ENCODE measurements at regions of chr14 and their contacts with region 1.

Region 1: DNA sequence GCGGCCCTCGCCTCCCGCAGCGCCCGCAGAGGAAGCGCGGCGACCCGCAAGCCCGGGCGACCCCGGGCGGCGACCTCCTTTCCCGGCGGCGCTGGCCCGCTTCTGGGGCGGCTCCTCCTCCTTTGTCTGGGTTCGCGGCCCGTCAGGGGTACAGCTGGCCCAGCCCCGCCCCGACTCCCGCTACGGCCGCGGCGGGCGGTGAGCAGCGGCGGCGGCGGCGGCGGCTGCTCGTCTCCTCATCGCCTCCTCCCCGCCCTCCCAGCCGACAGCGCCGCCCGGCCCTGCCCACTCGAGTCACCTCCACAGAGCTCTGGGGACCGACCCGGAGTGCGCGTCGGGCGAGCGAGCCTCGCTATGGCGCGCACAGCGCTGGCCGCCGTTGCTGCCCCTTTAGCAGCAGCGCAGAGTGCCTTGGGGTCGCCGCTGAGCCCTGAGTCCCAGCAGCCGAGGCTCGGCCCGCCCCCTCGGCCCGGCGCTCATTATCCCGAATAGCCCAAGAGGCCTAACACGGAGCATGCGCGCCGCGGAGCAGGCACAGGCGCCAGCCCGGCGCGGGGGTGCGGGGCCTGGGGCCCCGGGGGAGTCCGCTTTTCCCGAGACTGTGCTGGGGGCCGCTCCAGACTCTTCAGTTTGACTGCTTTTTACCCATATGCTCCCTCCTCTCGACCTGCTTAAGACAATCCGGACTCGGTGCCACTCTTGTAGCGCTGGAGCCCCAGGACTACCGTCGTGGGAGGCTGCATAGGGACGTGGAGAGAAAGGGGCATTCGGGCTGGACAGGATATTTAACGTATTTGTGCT is at the start of gene SOS2:
- DNase-seq: peak; percentile 83 to 85
- ATAC-seq: peak; percentile 78 to 93 (median 86)
- H3K4me3 ChIP-seq: peak within 1 kb of the TSS; percentile 95
- H3K4me3 Mint-ChIP-seq: peak within 1 kb of the TSS; percentile 89
- H3K27ac ChIP-seq: peak within 1 kb of the TSS; percentile 98
- H3K27ac Mint-ChIP-seq: peak within 1 kb of the TSS; percentile 92 to 96
- H3K4me1 ChIP-seq: peaks cover 14% of the 10 kb centered on the region
- H3K4me1 Mint-ChIP-seq: peaks cover 35% of the 10 kb centered on the region in 2 donors
- H3K27me3 ChIP-seq: no peaks in the 10 kb centered on the region
- H3K27me3 Mint-ChIP-seq: no peaks in the 10 kb centered on the region
- CTCF ChIP-seq: no peak
- total RNA-seq, gene SOS2: 64.7 to 82.2 (median 69.5) TPM

Region 2: GRCh38 chr14:49862089-49862673 is 369.5 kb before region 1 on chr14:
- intact Hi-C with region 1: loop called (anchors 5 kb)
- DNase-seq: peak; percentile 87 to 94
- ATAC-seq: peak; percentile 34 to 78 (median 38)
- H3K4me3 ChIP-seq: peak overlapping the region; percentile 73
- H3K4me3 Mint-ChIP-seq: no peak overlapping the region
- H3K27ac ChIP-seq: peak overlapping the region; percentile 97
- H3K27ac Mint-ChIP-seq: no peak overlapping the region
- H3K4me1 ChIP-seq: peaks cover 31% of the 10 kb centered on the region
- H3K4me1 Mint-ChIP-seq: no peaks in the 10 kb centered on the region
- H3K27me3 ChIP-seq: no peaks in the 10 kb centered on the region
- H3K27me3 Mint-ChIP-seq: peaks cover 5 to 10% of the 10 kb centered on the region in 2 donors
- CTCF ChIP-seq: peak; percentile 100

Region 3: DNA sequence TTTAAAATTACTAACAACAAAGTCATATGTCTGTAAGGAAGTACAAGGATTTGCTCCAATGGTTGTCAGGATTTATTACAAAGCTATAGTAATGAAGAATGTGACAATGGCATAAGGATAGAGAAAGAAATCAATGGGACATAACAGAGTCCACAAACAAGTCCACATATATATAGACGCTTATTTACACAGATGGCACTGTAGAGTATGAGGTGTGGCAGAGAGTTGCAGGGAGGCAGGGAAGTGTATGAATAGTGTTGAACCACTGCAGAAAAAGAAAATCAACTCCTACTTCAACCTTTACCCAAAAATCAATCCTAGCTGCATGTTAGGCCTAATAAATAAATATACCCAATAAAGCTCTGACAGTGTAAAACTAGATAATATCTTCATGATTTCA is 21.6 kb before region 1 on chr14:
- intact Hi-C with region 1: no loop called
- DNase-seq: no peak
- ATAC-seq: no peak
- H3K4me3 ChIP-seq: no peak overlapping the region
- H3K4me3 Mint-ChIP-seq: no peak overlapping the region
- H3K27ac ChIP-seq: no peak overlapping the region
- H3K27ac Mint-ChIP-seq: no peak overlapping the region
- H3K4me1 ChIP-seq: no peaks in the 10 kb centered on the region
- H3K4me1 Mint-ChIP-seq: peaks cover 30 to 34% of the 10 kb centered on the region in 2 donors
- H3K27me3 ChIP-seq: no peaks in the 10 kb centered on the region
- H3K27me3 Mint-ChIP-seq: no peaks in the 10 kb centered on the region
- CTCF ChIP-seq: no peak

Region 4: DNA sequence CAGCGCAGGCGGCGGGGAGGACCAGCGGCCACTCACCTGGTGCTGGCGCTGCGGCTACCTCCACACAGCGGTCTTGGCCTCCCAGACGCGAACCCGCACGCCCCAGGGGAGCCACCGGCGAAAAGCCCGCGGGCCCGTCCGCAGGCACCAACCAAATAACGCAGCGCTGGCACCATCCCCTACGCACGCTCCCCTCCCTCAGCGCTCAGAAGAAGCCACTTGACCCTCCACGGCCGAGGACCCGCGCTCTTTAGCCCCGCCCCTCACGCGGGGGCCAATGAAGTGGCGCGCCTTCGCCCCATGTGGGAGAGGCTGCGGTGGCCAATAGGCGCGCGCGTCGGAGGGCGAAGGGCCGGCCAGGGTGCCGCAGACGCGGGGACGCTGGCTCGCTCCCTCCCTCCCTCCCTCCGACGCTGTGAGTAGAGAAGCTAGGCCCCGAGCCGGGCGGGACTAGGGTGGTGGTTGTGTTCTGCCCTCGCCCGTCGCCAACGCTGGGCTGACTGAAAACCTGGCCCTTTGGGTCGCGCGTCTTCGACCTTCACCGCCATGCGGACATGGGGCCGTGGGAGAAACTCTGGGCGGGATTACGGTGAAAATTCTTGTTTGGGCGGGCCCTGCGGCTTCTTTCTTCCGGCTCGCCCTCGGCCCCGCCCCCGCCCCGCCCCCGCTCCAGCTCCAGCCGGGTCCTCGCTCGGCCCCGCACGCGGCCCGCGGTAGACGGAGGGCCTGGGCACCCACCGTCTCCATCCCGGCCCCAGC is 80.5 kb after region 1 on chr14 and contains the starts of genes DMAC2L and L2HGDH:
- intact Hi-C with region 1: loop called (anchors 5 kb)
- DNase-seq: peak; percentile 89 to 94
- ATAC-seq: peak; percentile 90 to 98 (median 90)
- H3K4me3 ChIP-seq: peak within 1 kb of the TSS; percentile 84
- H3K4me3 Mint-ChIP-seq: peak within 1 kb of the TSS; percentile 94
- H3K27ac ChIP-seq: peak within 1 kb of the TSS; percentile 89
- H3K27ac Mint-ChIP-seq: peak within 1 kb of the TSS; percentile 94 to 95
- H3K4me1 ChIP-seq: peaks cover 18% of the 10 kb centered on the region
- H3K4me1 Mint-ChIP-seq: peaks cover 27 to 46% of the 10 kb centered on the region in 2 donors
- H3K27me3 ChIP-seq: no peaks in the 10 kb centered on the region
- H3K27me3 Mint-ChIP-seq: no peaks in the 10 kb centered on the region
- CTCF ChIP-seq: no peak
- total RNA-seq, gene DMAC2L: 24.7 to 28.7 (median 25.0) TPM
- total RNA-seq, gene L2HGDH: 4.2 to 5.6 (median 5.4) TPM

Region 5: GRCh38 chr14:50347521-50347920 is 115.8 kb after region 1 on chr14:
- intact Hi-C with region 1: no loop called
- DNase-seq: no peak
- ATAC-seq: no peak
- H3K4me3 ChIP-seq: no peak overlapping the region
- H3K4me3 Mint-ChIP-seq: no peak overlapping the region
- H3K27ac ChIP-seq: no peak overlapping the region
- H3K27ac Mint-ChIP-seq: peak overlapping the region in 1 of 2 donors; percentile 17
- H3K4me1 ChIP-seq: peaks cover 6% of the 10 kb centered on the region
- H3K4me1 Mint-ChIP-seq: peaks cover 12 to 34% of the 10 kb centered on the region in 2 donors
- H3K27me3 ChIP-seq: no peaks in the 10 kb centered on the region
- H3K27me3 Mint-ChIP-seq: no peaks in the 10 kb centered on the region
- CTCF ChIP-seq: no peak

Region 6: DNA sequence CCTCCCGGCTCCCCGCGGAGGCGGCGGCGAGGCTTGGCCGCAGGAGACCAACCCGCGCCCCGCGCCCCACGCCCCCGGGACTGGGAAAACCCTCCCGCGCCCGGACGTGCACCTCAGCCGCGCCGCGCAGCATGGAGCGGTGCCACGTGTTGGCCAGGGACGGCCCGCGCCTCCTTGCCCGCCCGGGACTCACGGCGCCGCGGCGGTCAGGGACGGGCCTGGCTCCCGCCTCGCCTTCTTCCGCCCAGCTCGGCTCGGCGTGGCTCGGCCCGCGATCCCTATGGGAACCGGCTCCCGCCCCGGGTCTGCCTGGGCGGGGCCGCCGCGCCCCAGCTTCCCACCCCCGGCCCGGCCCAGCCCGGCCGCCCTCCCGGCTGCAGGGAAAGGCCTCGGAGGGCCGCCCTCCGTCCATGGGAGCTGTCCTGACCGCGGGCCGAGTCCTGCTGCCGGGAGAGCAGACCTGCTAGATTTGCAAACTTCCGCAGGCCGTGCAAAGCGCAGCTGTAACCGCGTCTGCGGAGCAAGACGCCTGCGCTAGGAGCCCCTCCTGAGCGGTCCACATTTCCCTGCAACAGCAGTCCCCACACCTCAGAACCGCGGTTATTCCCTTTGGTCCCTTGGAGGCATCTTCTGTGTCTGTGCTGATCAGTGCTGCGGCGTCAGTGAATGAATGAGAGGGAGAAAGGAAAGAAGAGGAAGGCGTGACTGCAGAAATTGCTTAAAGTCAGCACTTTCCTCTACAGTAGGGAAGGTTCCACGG is 165.1 kb after region 1 on chr14 and contains the start of gene CDKL1:
- intact Hi-C with region 1: loop called (anchors 5 kb)
- DNase-seq: peak; percentile 28 to 56
- ATAC-seq: peak; percentile 72 to 80 (median 77)
- H3K4me3 ChIP-seq: peak within 1 kb of the TSS; percentile 48
- H3K4me3 Mint-ChIP-seq: peak within 1 kb of the TSS; percentile 91
- H3K27ac ChIP-seq: no peak within 1 kb of the TSS
- H3K27ac Mint-ChIP-seq: peak within 1 kb of the TSS; percentile 47 to 83
- H3K4me1 ChIP-seq: peaks cover 7% of the 10 kb centered on the region
- H3K4me1 Mint-ChIP-seq: peaks cover 6 to 13% of the 10 kb centered on the region in 2 donors
- H3K27me3 ChIP-seq: no peaks in the 10 kb centered on the region
- H3K27me3 Mint-ChIP-seq: peaks cover 0 to 5% of the 10 kb centered on the region in 2 donors
- CTCF ChIP-seq: no peak
- total RNA-seq, gene CDKL1: 12.4 to 16.7 (median 15.4) TPM